ENCODE measurements at regions of chr5 and their contacts with region 1.

Region 1: DNA sequence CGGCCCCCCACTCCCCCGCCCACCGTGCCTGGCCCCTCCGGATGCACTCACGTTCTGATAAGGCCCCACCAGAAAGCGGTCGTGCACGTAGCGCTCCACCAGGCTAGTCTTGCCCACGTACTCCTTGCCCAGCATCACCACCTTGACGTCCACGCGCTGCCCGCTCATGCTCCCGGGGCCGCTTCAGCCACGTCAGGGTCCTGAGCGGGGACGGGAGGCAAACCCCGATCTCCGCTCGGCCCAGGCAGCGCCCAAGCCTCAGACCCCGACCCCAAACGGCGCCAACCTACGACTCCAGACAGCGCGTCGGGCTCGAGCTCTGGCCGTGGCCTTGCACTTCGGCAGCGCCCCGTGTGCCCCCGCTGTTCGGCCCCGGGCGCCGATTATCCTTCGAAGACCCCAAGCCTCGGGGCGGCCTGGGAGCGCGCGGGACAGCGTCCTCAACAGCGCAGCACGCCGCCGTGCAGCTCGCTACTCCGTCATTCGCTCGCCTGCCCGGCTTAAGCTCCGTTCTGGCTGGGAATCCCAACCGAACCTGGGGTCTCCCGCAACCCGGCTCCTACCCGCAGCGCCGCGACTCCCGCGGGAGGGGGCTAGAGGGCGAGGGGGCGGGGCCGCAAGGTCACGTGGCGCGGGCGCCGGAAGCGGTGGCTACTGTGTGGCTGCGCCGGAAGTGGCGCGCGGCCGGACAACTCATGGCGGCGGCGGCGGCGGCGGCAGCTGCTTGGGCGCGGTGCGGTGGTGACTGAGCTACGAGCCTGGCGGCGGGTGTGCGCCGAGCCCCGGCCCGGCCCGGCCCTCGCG is at the starts of genes PRELID1 and RAB24:
- DNase-seq: peak; percentile 86 to 98
- H3K4me3 ChIP-seq: peak within 1 kb of the TSS; percentile 88
- CTCF ChIP-seq: no peak
- POLR2A ChIP-seq: no peak
- total RNA-seq, gene PRELID1: 60.7 to 122 (median 96.7) TPM
- total RNA-seq, gene RAB24: 52.2 to 98.5 (median 73.7) TPM

Region 2: GRCh38 chr5:177113566-177114424 is 189.5 kb before region 1 on chr5:
- intact Hi-C with region 1: loop called (anchors 10 kb)
- DNase-seq: peak; percentile 75 to 95
- H3K4me3 ChIP-seq: no peak overlapping the region
- CTCF ChIP-seq: peak in 2 of 3 donors; percentile 70 to 98
- POLR2A ChIP-seq: no peak

Region 3: GRCh38 chr5:177520916-177521910 is 217.9 kb after region 1 on chr5:
- intact Hi-C with region 1: no loop called
- DNase-seq: no peak
- H3K4me3 ChIP-seq: no peak overlapping the region
- CTCF ChIP-seq: no peak
- POLR2A ChIP-seq: no peak

Measured in lower leg skin (tissue), 4 donors.